GM12878 (cell line): ENCODE measurements at regions of chr2 and their contacts with region 1.

Region 1: GRCh38 chr2:229273723-229274338 is 2.7 kb upstream of the PID1 start:
- DNase-seq: peak; percentile 11
- ATAC-seq: peak; percentile 89
- H3K4me3 ChIP-seq: no peak overlapping the region
- H3K27ac ChIP-seq: no peak overlapping the region
- H3K4me1 ChIP-seq: no peaks in the 10 kb centered on the region
- H3K27me3 ChIP-seq: peaks cover 0 to 3% of the 10 kb centered on the region in 2 experiments; a peak in 2 of 4 replicates
- CTCF ChIP-seq: peak; percentile 69 to 77 (median 77)
- EP300 ChIP-seq: no peak
- POLR2A ChIP-seq: no peak
- RAD21 ChIP-seq: peak; percentile 55

Region 2: GRCh38 chr2:228689053-228689452 is 584.8 kb before region 1 on chr2:
- CTCF ChIA-PET with region 1: no interaction called
- POLR2A ChIA-PET with region 1: no interaction called
- RAD21 ChIA-PET with region 1: no interaction called
- SMC1A ChIA-PET with region 1: no interaction called
- in situ Hi-C with region 1: no loop called
- intact Hi-C with region 1: loop called (anchors 5 kb)
- DNase-seq: no peak
- ATAC-seq: no peak
- H3K4me3 ChIP-seq: no peak overlapping the region
- H3K27ac ChIP-seq: no peak overlapping the region
- H3K4me1 ChIP-seq: no peaks in the 10 kb centered on the region
- H3K27me3 ChIP-seq: no peaks in the 10 kb centered on the region
- CTCF ChIP-seq: peak in 2 of 3 experiments; percentile 6 to 13; a peak in 1 of 6 replicates
- EP300 ChIP-seq: no peak
- POLR2A ChIP-seq: no peak
- RAD21 ChIP-seq: no peak

Region 3: DNA sequence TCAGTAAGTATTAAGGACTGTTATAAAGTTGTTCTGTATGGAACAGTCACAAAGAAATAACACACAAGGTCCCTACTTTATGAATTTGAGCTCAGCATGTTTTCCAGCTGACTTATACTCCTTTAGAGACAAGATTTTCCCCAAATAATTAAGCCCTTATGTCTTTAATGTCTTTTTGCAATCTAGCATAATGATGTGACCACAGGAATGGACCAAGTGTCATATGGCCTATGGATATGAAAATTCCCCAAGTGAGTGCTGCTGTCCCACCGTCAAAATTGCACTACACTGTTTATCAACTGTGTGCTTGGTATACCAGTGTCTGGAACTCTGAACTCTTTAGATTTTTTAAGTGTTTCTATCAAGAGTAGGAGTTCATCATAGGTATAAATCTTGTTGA is 372.3 kb before region 1 on chr2:
- CTCF ChIA-PET with region 1: no interaction called
- POLR2A ChIA-PET with region 1: no interaction called
- RAD21 ChIA-PET with region 1: no interaction called
- SMC1A ChIA-PET with region 1: no interaction called
- in situ Hi-C with region 1: no loop called
- intact Hi-C with region 1: no loop called
- DNase-seq: no peak
- ATAC-seq: no peak
- H3K4me3 ChIP-seq: no peak overlapping the region
- H3K27ac ChIP-seq: no peak overlapping the region
- H3K4me1 ChIP-seq: no peaks in the 10 kb centered on the region
- H3K27me3 ChIP-seq: no peaks in the 10 kb centered on the region
- CTCF ChIP-seq: no peak
- EP300 ChIP-seq: no peak
- POLR2A ChIP-seq: no peak
- RAD21 ChIP-seq: no peak

Region 4: DNA sequence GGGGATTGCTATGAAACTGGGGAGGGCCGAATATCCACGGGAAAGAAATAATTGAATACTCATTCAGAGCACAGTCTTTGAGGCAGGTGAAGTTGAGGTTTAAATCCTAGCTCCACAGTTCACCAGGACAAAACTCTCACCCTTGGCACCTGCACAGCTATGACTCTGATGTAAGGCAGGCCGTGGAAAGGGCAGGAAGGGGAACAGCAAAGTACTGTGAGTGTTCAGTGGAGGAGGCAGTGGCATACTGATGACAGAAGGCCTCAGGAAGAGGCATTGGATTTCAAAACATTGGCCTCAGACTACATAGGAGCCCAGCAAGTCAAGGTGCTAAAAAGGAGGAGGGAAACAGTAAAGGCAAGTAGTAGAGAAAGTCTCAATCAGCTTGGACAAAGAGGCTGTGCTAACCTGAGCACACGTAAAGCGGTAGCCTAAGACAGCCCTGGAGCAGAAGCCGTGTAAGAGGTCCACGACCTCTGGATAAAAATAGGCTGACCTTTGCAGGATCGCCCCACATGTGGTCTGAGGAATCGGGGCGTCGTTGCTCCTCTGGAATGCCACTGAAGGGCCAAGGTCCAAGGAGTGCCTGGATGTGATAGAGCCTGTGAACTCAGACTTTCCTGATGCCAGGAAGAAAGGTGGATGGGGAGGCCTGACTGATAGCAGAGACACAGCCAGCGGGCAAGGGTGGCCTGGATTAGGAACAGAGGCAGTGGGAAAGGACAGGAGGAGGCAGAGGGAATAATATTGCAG is 246.3 kb before region 1 on chr2:
- CTCF ChIA-PET with region 1: no interaction called
- POLR2A ChIA-PET with region 1: no interaction called
- RAD21 ChIA-PET with region 1: no interaction called
- SMC1A ChIA-PET with region 1: no interaction called
- in situ Hi-C with region 1: no loop called
- intact Hi-C with region 1: no loop called
- DNase-seq: no peak
- ATAC-seq: no peak
- H3K4me3 ChIP-seq: no peak overlapping the region
- H3K27ac ChIP-seq: no peak overlapping the region
- H3K4me1 ChIP-seq: no peaks in the 10 kb centered on the region
- H3K27me3 ChIP-seq: no peaks in the 10 kb centered on the region
- CTCF ChIP-seq: no peak
- EP300 ChIP-seq: no peak
- POLR2A ChIP-seq: no peak
- RAD21 ChIP-seq: no peak

Region 5: GRCh38 chr2:229133155-229133772 is 140.6 kb before region 1 on chr2:
- CTCF ChIA-PET with region 1: interaction called, 5 read pairs
- POLR2A ChIA-PET with region 1: no interaction called
- RAD21 ChIA-PET with region 1: no interaction called
- SMC1A ChIA-PET with region 1: no interaction called
- in situ Hi-C with region 1: no loop called
- intact Hi-C with region 1: loop called (anchors 1 kb)
- DNase-seq: no peak
- ATAC-seq: peak; percentile 29; the same call in 1 of the 3 replicates
- H3K4me3 ChIP-seq: no peak overlapping the region
- H3K27ac ChIP-seq: no peak overlapping the region
- H3K4me1 ChIP-seq: no peaks in the 10 kb centered on the region
- H3K27me3 ChIP-seq: no peaks in the 10 kb centered on the region
- CTCF ChIP-seq: peak in 2 of 3 experiments; percentile 25 to 35; a peak in 2 of 6 replicates
- EP300 ChIP-seq: no peak
- POLR2A ChIP-seq: no peak
- RAD21 ChIP-seq: no peak

Region 6: GRCh38 chr2:229212241-229212640 is 61.6 kb before region 1 on chr2:
- CTCF ChIA-PET with region 1: no interaction called
- POLR2A ChIA-PET with region 1: no interaction called
- RAD21 ChIA-PET with region 1: no interaction called
- SMC1A ChIA-PET with region 1: no interaction called
- in situ Hi-C with region 1: no loop called
- intact Hi-C with region 1: no loop called
- DNase-seq: no peak
- ATAC-seq: no peak
- H3K4me3 ChIP-seq: no peak overlapping the region
- H3K27ac ChIP-seq: no peak overlapping the region
- H3K4me1 ChIP-seq: no peaks in the 10 kb centered on the region
- H3K27me3 ChIP-seq: no peaks in the 10 kb centered on the region
- CTCF ChIP-seq: no peak
- EP300 ChIP-seq: no peak
- POLR2A ChIP-seq: no peak
- RAD21 ChIP-seq: no peak

Region 7: DNA sequence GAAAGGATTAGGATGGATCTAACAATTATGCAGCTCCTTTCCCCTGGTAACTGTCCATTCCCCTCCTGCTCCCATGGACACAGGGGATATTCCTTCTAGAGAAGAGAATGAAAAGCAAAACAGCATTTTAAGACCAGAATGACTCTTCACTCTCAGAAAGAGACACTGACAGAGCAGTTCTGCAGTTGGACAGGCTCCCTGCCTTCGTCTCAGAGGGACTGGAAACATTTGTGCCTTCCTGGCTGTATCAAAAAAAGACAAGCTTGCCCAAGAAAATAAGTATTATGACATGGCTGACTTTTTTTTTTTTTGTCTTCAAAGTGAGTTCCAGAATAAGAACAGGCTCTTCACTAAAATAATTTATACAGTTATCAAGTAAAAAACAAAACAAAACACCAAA is 12.2 kb before region 1 on chr2:
- CTCF ChIA-PET with region 1: interaction called, 16 read pairs
- POLR2A ChIA-PET with region 1: no interaction called
- RAD21 ChIA-PET with region 1: no interaction called
- SMC1A ChIA-PET with region 1: no interaction called
- in situ Hi-C with region 1: no loop called
- intact Hi-C with region 1: no loop called
- DNase-seq: no peak
- ATAC-seq: no peak
- H3K4me3 ChIP-seq: no peak overlapping the region
- H3K27ac ChIP-seq: no peak overlapping the region
- H3K4me1 ChIP-seq: no peaks in the 10 kb centered on the region
- H3K27me3 ChIP-seq: no peaks in the 10 kb centered on the region
- CTCF ChIP-seq: no peak
- EP300 ChIP-seq: no peak
- POLR2A ChIP-seq: no peak
- RAD21 ChIP-seq: no peak